Cardiac septum (tissue), 1 donor: ENCODE measurements at regions of chr11 and their contacts with region 1.

Region 1: DNA sequence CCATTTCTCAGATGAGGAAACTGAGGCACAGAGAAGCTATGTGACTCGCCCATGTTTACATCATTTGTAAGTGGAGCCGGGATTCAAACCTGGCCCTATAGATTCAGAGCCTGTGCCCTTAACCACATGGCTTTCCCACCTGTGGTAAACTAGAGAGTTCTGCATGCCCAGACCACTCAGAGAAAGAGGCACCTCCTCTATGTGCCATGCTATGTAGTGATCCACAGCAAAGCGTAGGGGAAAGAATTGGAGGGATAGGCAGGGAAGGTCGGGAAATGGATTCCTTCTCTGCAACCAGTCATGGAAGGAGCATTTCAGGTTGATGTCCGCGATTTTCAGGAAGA is 15.4 kb upstream of the POU2AF2 start:
- DNase-seq: no peak

Region 2: DNA sequence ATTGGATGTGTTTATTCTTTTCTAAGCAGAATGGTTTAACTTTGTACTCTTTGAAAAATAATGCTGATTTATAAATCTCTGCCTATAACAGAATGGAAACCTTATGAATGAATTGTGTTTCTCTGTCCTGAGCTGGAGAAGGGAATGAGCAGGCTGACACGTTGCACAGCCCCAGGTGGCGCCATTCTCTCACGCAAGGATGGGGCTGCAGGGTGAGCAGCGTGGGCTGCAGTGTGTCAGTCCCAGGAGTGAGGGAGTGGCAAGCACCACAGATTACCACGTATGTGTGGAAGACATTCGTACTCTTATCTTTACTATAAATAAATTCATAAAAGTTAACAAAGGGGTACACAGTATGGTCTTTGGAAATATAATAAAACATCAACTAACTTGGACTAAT is 766.9 kb before region 1 on chr11:
- intact Hi-C with region 1: loop called (anchors 10 kb)
- DNase-seq: no peak

Region 3: DNA sequence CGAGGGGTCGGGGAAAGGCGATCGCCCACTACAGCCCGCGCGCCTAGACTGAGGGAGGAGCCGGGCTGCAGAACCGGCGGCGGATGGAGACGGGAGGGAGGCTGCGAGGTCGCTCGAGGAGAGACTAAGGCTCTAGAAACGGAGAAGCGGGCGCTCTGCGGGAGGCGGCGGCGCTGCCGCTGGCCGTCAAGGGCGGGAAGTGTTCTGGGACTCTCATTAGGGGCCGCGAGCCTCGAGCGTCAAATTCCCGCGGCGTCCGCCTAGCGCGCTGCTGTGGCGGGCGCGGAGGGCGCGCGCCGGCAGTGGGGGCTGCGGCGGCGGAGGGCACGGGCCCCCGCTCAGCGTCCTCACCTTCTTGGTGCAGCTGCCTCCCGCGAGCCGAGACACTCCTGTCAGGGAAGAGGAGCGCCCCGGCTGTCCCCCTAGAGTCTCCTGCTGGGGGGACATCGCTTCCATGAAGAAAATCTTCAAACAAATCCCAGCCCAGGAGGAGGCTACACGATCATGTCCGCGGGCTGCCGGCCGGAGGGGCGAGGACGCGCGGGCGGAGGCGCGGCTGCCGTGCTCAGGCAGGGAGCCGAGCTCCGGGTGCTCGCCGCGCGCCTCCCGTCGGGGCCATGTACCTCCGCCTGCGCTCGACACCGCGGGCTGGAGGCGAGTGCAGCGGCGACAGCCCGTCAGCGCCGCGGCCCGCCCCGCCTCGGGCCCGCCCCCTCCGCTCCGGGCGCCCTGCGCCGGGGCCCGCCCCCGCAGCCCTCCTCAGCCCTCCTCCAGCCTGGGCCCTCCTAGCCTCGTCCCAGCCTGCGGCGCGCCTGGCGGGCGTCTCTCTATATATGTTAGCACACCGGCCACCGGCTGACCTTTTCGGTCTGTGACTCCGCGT is 518.1 kb before region 1 on chr11 and contains the start of gene ARHGAP20:
- intact Hi-C with region 1: loop called (anchors 5 kb)
- DNase-seq: peak; percentile 77
- total RNA-seq, gene ARHGAP20: 0.19 TPM